PC-3 (cell line): ENCODE measurements at regions of chr11 and their contacts with region 1.

Region 1: GRCh38 chr11:68459886-68460740 is 439 bp upstream of the PPP6R3 start:
- DNase-seq: peak; percentile 98
- ATAC-seq: peak; percentile 83
- H3K4me3 ChIP-seq: peak overlapping the region; percentile 91
- H3K27ac ChIP-seq: peak overlapping the region; percentile 80
- H3K4me1 ChIP-seq: peaks cover 11% of the 10 kb centered on the region; the same call in 1 of the 2 replicates
- H3K27me3 ChIP-seq: no peaks in the 10 kb centered on the region
- CTCF ChIP-seq: no peak

Region 2: DNA sequence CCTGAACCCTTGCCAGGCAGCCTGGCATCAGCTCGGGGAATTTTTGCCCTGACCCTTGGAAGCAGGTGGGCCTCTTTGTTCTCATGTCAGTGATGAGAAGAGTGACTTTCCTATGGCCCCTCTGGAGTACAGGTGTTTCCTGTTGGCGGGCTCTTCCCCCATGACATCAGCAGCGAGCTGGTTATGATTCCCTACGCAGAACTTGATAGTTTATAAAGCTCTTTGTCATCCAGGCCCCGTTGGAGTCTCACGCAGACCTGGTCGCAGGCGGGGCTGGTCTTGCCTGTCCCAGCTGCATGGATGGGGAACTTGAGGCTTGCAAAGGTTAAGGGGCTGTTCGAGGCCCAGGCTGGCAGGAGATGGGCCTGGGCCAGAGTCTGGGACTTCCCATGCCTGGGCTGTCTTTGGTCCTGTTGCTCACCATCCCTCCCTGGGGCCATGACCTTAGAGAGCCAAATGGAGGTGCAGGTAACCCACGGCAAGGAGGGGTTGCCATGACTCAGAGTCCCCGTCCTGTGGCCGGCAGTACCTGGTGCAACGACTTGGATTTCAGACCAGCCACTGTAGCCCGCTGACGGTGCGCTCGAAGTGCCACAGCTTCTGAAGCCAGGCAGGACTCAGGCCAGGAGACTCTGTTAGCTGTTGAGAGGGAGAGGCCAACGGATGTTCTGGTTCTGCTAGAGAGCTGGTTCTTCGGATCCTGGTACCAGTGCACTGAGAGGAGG is 45.5 kb before region 1 on chr11:
- CTCF ChIA-PET with region 1: no interaction called
- POLR2A ChIA-PET with region 1: no interaction called
- intact Hi-C with region 1: no loop called
- DNase-seq: no peak
- ATAC-seq: no peak
- H3K4me3 ChIP-seq: no peak overlapping the region
- H3K27ac ChIP-seq: no peak overlapping the region
- H3K4me1 ChIP-seq: no peaks in the 10 kb centered on the region
- H3K27me3 ChIP-seq: no peaks in the 10 kb centered on the region
- CTCF ChIP-seq: no peak

Region 3: GRCh38 chr11:68506908-68507307 is 46.8 kb after region 1 on chr11:
- CTCF ChIA-PET with region 1: no interaction called
- POLR2A ChIA-PET with region 1: no interaction called
- intact Hi-C with region 1: no loop called
- DNase-seq: peak; percentile 34
- ATAC-seq: 0 out of 2 replicates have a peak, but pooled peaks have one; percentile 51
- H3K4me3 ChIP-seq: no peak overlapping the region
- H3K27ac ChIP-seq: no peak overlapping the region
- H3K4me1 ChIP-seq: no peaks in the 10 kb centered on the region
- H3K27me3 ChIP-seq: no peaks in the 10 kb centered on the region
- CTCF ChIP-seq: peak; percentile 38; the same call in 1 of the 2 replicates

Region 4: DNA sequence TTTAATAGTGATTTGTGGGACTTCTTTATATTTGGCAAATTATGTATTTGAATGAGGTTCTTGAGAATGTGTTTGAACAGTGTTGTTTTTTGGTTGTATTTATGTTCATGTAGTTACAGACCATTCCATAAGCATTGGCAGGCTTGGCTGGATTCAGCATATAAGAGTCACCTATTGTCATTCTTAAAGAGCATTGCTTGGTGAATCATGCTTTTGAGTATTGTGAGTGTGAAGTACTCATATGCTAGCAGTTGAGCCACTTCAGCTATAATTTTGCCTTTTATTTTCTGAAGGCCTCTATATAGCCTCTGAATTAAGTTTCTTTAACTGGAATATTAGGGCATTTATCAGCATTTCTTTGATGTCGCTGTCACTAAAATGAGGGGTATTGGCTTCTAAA is 114.2 kb after region 1 on chr11:
- CTCF ChIA-PET with region 1: no interaction called
- POLR2A ChIA-PET with region 1: no interaction called
- intact Hi-C with region 1: loop called (anchors 10 kb)
- DNase-seq: peak; percentile 57
- ATAC-seq: peak; percentile 58
- H3K4me3 ChIP-seq: no peak overlapping the region
- H3K27ac ChIP-seq: no peak overlapping the region
- H3K4me1 ChIP-seq: peaks cover 10% of the 10 kb centered on the region
- H3K27me3 ChIP-seq: no peaks in the 10 kb centered on the region
- CTCF ChIP-seq: no peak